ENCODE measurements at regions of chr11 and their contacts with region 1.

Region 1: DNA sequence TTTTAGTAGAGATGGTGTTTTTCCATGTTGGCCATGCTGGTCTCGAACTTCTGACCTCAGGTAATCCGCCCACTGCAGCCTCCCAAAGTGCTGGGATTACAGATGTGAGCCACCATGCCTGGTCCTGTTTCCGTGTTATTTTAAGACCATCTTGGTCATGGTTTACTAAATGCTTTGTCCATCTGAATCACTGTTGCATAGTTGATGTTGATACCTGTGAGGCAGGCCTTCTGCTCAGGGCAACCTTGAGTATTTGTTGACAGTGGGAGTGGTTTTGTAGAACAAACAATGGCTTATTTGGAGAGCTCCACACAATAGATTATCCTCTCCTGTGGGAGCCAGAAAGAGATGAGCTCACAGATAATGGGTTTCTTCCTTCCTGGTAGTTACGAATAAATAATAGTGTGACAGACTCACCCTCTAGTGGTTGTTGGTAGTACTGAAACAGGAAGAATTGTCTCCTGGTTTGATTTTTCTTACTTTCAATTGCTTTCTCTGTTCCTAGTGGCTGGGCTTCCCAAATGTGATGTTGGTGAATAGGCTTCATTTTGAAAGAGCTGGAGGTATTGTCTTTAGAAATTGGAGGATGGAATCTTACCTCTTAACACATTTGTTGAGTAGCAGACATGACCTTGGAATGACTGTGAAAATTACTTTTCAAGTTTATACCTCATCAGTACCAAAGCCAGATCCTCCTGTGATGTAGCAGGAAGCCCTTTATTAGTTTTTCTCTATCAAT is 39.0 kb downstream of the CTNND1 start:
- DNase-seq: peak; percentile 71
- CTCF ChIP-seq: peak; percentile 67

Region 2: GRCh38 chr11:57567515-57568329 is 232.9 kb before region 1 on chr11 and contains the start of gene UBE2L6:
- CTCF ChIA-PET with region 1: interaction called, 22 read pairs
- POLR2A ChIA-PET with region 1: no interaction called
- DNase-seq: peak; percentile 79
- CTCF ChIP-seq: peak; percentile 91

Region 3: GRCh38 chr11:57667736-57668435 is 132.7 kb before region 1 on chr11 and contains the start of gene ZDHHC5:
- CTCF ChIA-PET with region 1: interaction called, 17 read pairs
- POLR2A ChIA-PET with region 1: no interaction called
- DNase-seq: peak; percentile 97
- CTCF ChIP-seq: peak; percentile 41

Region 4: DNA sequence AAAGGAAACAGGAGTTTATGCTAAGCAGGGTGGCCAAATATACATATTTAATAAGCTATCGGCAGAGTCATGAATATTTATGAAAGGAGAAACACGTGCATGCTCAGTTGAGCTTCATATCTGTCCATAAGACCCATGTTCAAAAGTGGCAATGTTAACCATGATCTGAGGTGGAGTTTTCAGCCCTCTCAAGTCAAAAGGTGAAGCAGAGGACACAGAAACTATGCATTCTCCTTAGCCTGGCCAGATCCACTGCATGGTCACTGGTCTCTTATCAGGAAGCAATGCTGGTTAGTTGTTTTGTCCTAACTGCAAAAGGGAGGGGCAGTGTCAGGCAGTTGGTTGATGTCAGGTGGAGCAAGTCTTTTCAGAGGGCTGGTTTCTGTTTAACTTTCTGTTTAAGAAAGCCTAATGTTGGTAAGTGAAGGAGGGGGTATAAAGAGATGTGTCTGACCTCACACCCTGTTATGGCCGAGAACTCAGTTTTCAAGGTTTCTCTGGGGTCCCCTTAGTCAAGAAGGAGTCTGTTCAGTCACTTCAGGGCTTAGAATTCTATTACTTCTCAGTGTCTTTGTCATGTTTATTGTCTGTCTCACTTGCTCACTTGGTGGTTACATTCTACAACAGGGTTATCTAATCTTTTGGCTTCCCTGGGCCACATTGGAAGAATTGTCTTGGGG is 64.9 kb before region 1 on chr11:
- CTCF ChIA-PET with region 1: interaction called, 142 read pairs
- POLR2A ChIA-PET with region 1: interaction called, 5 read pairs
- DNase-seq: no peak
- CTCF ChIP-seq: no peak

Region 5: DNA sequence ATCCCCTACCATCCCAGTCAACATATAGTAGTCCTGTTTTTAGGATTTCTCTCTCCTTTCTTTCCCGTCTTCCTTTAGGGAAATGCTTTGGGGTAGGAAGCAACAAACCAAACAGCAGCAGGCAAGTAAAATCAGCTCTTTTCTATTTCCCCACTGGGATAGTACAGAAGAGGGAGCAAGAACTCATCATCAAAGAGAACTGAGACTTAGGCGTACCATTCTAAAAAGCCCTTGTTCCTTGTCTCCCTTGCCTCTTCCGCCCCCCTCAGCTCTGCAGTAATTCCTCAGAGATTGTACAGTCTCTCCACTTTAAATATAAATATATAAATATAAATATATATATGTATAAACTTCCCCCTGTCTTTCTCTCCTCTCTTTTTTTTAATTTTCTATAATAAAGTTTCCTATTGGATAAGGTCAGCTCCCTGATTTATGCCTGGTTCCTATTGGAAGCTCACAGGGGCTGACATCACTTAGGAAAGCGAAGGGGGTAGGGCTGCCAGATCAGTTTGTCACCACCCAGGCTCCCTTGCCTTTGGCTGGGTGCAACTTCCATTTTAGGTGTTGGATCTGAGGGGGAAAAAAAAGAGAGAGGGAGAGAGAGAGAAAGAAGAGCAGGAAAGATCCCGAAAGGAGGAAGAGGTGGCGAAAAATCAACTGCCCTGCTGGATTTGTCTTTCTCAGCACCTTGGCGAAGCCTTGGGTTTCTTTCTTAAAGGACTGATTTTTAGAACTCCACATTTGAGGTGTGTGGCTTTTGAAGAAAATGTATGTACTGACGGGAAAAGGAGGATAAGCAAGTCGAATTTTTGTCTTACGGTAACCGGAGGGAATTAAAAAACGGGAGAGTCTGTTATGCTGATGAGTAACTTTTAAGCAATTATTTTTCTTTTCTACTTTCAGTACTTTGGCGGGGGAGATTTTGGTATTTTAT is 39.0 kb before region 1 on chr11 and contains the start of gene CTNND1:
- CTCF ChIA-PET with region 1: interaction called, 92 read pairs
- POLR2A ChIA-PET with region 1: no interaction called
- DNase-seq: peak; percentile 87
- CTCF ChIP-seq: no peak

Region 6: GRCh38 chr11:57787920-57788702 is 12.5 kb before region 1 on chr11:
- CTCF ChIA-PET with region 1: interaction called, 57 read pairs
- POLR2A ChIA-PET with region 1: interaction called, 4 read pairs
- DNase-seq: peak; percentile 59
- CTCF ChIP-seq: no peak

Region 7: GRCh38 chr11:57823859-57824258 is 23.2 kb after region 1 on chr11:
- CTCF ChIA-PET with region 1: interaction called, 10 read pairs
- POLR2A ChIA-PET with region 1: no interaction called
- DNase-seq: no peak
- CTCF ChIP-seq: no peak